Gastrocnemius medialis (tissue), 4 donors: ENCODE measurements at regions of chr2 and their contacts with region 1.

Region 1: DNA sequence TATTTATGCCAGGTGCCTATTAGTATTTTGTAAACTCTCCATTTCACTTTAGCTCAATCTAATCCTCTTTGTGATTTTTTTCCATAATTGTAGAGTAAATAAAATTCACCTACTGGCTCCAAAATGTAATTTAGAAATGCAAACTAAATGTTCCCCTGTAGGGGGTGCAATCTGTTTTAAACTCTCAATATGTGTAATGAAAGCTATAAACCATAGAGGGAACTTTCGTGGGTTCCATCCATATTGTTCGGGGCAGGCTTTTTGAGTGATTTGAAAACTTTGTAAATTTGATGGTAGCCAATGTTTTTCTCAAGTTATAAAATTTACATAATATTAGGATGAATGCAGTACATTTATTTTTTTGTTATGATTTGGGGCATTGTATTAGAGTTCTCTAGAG is 49.4 kb downstream of the TSPYL6 start:
- DNase-seq: no peak
- ATAC-seq: no peak
- H3K4me3 ChIP-seq: no peak overlapping the region
- H3K27ac ChIP-seq: no peak overlapping the region
- H3K4me1 ChIP-seq: peaks cover 17 to 33% of the 10 kb centered on the region in 2 donors
- H3K27me3 ChIP-seq: no peaks in the 10 kb centered on the region
- CTCF ChIP-seq: peak; percentile 21 to 49 (median 44)
- POLR2A ChIP-seq: no peak

Region 2: GRCh38 chr2:54503192-54503591 is 296.6 kb after region 1 on chr2:
- in situ Hi-C with region 1: loop called in 1 of 4 experiments (anchors 25 kb)
- intact Hi-C with region 1: loop called (anchors 10 kb)
- DNase-seq: no peak
- ATAC-seq: no peak
- H3K4me3 ChIP-seq: no peak overlapping the region
- H3K27ac ChIP-seq: peak overlapping the region in 1 of 4 donors; percentile 61
- H3K4me1 ChIP-seq: peaks cover 55 to 62% of the 10 kb centered on the region in 2 donors
- H3K27me3 ChIP-seq: no peaks in the 10 kb centered on the region
- CTCF ChIP-seq: peak; percentile 8 to 55 (median 34)
- POLR2A ChIP-seq: no peak